AG04449 (cell line): ENCODE measurements at regions of chr15 and their contacts with region 1.

Region 1: GRCh38 chr15:49169880-49170597 is at the start of gene GALK2:
- DNase-seq: no peak
- H3K4me3 ChIP-seq: peak within 1 kb of the TSS; percentile 76
- CTCF ChIP-seq: no peak

Region 2: DNA sequence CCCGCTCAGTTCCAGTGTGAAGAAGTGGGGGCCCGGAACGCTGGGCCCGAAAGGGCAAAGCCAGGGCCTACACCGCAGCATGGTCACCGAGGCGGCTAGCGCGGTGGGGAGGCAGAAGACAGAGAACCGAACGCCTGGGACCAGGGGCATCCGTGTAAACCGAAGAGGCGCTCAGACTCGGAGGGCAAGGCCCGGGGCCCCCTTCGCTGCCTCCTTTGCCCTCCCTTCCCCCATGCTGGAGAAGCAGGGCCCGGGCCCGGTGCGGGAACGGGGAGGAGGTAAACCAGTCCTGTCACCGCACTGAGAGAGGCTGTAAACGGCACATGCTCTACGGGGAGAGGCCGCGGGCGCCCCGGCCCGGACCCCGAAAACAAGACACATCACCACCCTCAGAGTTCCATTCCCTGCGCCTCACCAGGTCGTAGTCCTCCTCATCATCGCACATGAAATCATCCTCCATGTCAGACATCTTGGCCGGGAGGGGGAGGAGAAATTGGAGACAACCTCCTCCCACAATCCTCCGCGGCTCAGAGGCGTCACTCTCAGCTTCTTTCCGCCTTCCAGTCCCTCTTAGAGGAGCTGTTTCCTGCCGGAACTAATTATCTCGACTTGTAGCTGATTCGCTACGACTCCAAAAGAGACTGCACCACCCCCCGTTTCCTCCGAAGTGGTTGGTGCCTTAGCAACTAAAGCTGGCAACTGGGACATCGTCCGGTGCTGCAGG is 14.8 kb before region 1 on chr15 and contains the start of gene COPS2:
- CTCF ChIA-PET with region 1: no interaction called
- POLR2A ChIA-PET with region 1: interaction called, 11 read pairs
- DNase-seq: peak; percentile 94
- H3K4me3 ChIP-seq: peak within 1 kb of the TSS; percentile 76
- CTCF ChIP-seq: no peak